Heart left ventricle (tissue), 16 donors: ENCODE measurements at regions of chr7 and their contacts with region 1.

Region 1: DNA sequence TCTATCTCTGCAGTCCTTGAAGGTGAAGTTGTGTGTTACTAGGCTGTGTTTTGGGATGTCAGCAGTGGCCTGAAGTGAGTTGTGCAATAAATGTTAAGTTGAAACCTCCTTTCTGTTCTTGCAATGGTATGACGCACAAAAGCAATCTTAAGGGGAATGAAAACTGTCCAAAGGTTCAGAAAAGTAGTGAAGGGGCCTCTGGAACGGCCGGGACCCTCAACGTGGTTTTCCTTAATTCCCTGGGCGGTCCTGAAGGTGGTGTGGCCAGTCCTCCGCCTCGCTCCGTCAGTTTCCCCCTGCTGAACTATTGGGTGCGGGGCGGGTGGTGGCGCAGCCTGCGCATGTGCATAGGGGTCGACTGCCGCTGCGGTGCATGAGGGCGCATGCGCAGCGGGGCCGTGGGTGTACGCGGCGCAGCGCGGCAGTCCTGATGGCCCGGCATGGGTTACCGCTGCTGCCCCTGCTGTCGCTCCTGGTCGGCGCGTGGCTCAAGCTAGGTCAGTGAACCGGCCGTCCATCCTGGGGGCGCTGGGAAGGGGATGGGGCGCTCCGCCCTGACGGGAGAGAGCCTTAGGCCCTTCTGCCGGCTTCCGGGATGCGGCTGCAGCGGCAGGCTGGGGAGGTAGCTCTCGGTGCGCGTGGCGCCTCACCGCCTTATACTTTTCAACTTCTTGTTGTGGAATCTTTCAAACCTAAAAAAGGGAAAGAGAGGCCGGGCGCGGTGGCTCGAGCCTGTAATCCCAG is at the start of gene SUMF2:
- DNase-seq: peak; percentile 93 to 97 (median 95)
- ATAC-seq: peak; percentile 99 to 100 (median 100)
- H3K4me3 ChIP-seq: peak within 1 kb of the TSS; percentile 52 to 94 (median 76)
- H3K27ac ChIP-seq: peak within 1 kb of the TSS; percentile 54 to 93 (median 90)
- H3K4me1 ChIP-seq: peaks cover 0 to 32% (median 11%) of the 10 kb centered on the region in 12 donors
- H3K27me3 ChIP-seq: no peaks in the 10 kb centered on the region
- CTCF ChIP-seq: peak in 10 of 12 donors; percentile 5 to 50 (median 31)
- POLR2A ChIP-seq: peak in 1 of 2 donors; percentile 83
- total RNA-seq, gene SUMF2: 23.1 to 61.5 (median 30.9) TPM

Region 2: GRCh38 chr7:55898287-55898686 is 165.8 kb before region 1 on chr7:
- intact Hi-C with region 1: loop called in 1 of 10 experiments (anchors 10 kb)
- DNase-seq: no peak
- ATAC-seq: no peak
- H3K4me3 ChIP-seq: no peak overlapping the region
- H3K27ac ChIP-seq: no peak overlapping the region
- H3K4me1 ChIP-seq: no peaks in the 10 kb centered on the region
- H3K27me3 ChIP-seq: no peaks in the 10 kb centered on the region
- CTCF ChIP-seq: no peak
- POLR2A ChIP-seq: no peak

Region 3: GRCh38 chr7:56003749-56004148 is 60.3 kb before region 1 on chr7:
- intact Hi-C with region 1: loop called in 2 of 10 experiments (anchors 5 kb)
- DNase-seq: no peak
- ATAC-seq: no peak
- H3K4me3 ChIP-seq: no peak overlapping the region
- H3K27ac ChIP-seq: no peak overlapping the region
- H3K4me1 ChIP-seq: peaks cover 0 to 6% (median 0%) of the 10 kb centered on the region in 12 donors
- H3K27me3 ChIP-seq: no peaks in the 10 kb centered on the region
- CTCF ChIP-seq: no peak
- POLR2A ChIP-seq: no peak

Region 4: GRCh38 chr7:56009695-56010094 is 54.4 kb before region 1 on chr7:
- intact Hi-C with region 1: loop called in 2 of 10 experiments (anchors 5 kb)
- DNase-seq: peak in 1 of 5 donors; percentile 21
- ATAC-seq: peak; percentile 71 to 83 (median 80)
- H3K4me3 ChIP-seq: no peak overlapping the region
- H3K27ac ChIP-seq: no peak overlapping the region
- H3K4me1 ChIP-seq: peaks cover 0 to 7% (median 0%) of the 10 kb centered on the region in 12 donors
- H3K27me3 ChIP-seq: no peaks in the 10 kb centered on the region
- CTCF ChIP-seq: no peak
- POLR2A ChIP-seq: no peak

Region 5: DNA sequence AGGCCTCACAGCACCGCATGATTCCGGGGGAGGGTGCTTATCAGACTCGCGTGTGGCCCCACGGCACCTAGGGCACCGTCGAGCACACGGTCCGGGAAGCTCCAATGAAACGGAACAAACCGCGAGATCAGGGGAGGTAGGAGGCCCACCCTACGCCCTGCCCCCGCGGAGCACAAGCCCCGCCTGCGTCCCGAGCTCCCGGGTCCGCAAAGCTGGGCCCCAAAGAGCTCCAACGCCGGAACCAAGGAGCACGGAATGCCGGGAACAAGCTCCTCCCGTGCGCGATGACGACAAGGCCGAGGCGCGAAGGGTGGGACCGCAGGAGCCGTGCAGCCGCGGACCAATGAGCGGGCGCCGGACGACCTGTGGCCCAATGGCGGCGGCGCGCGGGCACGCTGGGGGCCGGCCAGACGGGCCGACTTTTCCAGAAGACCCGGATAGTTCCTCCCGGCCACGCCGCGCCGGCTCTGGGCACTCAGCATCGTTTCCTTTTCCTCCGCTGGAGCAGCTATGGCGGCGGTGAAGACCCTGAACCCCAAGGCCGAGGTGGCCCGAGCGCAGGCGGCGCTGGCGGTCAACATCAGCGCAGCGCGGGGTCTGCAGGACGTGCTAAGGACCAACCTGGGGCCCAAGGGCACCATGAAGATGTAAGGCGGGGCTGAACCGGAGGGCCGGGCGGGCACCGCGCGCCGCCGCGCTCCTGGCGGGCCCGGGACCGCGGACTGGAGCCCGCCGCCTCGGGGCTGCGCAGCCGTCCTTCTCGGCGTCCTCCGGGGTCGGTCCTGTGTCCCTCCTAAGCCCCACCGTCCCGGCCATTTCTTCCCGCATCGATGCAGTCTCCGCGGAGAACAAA is 12.5 kb before region 1 on chr7 and contains the starts of genes CCT6A and PSPH:
- intact Hi-C with region 1: loop called in 1 of 10 experiments (anchors 1 kb)
- DNase-seq: peak; percentile 98 to 99 (median 99)
- ATAC-seq: peak; percentile 98 to 100 (median 100)
- H3K4me3 ChIP-seq: peak within 1 kb of the TSS; percentile 50 to 96 (median 82)
- H3K27ac ChIP-seq: peak within 1 kb of the TSS; percentile 80 to 96 (median 92)
- H3K4me1 ChIP-seq: peaks cover 7 to 45% (median 26%) of the 10 kb centered on the region in 12 donors
- H3K27me3 ChIP-seq: no peaks in the 10 kb centered on the region
- CTCF ChIP-seq: no peak
- POLR2A ChIP-seq: peak; percentile 23 to 81
- total RNA-seq, gene CCT6A: 44.6 to 85.8 (median 62.6) TPM
- total RNA-seq, gene PSPH: 7.5 to 15.9 (median 8.9) TPM

Region 6: GRCh38 chr7:56188823-56189346 is 124.8 kb after region 1 on chr7:
- intact Hi-C with region 1: no loop called
- DNase-seq: no peak
- ATAC-seq: no peak
- H3K4me3 ChIP-seq: no peak overlapping the region
- H3K27ac ChIP-seq: no peak overlapping the region
- H3K4me1 ChIP-seq: no peaks in the 10 kb centered on the region
- H3K27me3 ChIP-seq: peaks cover 0 to 18% (median 0%) of the 10 kb centered on the region in 9 donors
- CTCF ChIP-seq: no peak
- POLR2A ChIP-seq: no peak